Activated CD4-positive, alpha-beta T cell treated with anti-CD3 and anti-CD28 coated beads, Interleukin-2, amount 10 ng/mL, durations not matched to agents 24 days and 14 days (primary cell): ENCODE measurements at regions of chr7 and their contacts with region 1.

Region 1: GRCh38 chr7:87797798-87798403 is 78.3 kb downstream of the SLC25A40 start:
- DNase-seq: peak; percentile 73
- H3K4me3 Mint-ChIP-seq: no peak overlapping the region
- H3K27ac Mint-ChIP-seq: no peak overlapping the region
- H3K4me1 Mint-ChIP-seq: no peaks in the 10 kb centered on the region
- H3K27me3 Mint-ChIP-seq: peaks cover 14% of the 10 kb centered on the region

Region 2: DNA sequence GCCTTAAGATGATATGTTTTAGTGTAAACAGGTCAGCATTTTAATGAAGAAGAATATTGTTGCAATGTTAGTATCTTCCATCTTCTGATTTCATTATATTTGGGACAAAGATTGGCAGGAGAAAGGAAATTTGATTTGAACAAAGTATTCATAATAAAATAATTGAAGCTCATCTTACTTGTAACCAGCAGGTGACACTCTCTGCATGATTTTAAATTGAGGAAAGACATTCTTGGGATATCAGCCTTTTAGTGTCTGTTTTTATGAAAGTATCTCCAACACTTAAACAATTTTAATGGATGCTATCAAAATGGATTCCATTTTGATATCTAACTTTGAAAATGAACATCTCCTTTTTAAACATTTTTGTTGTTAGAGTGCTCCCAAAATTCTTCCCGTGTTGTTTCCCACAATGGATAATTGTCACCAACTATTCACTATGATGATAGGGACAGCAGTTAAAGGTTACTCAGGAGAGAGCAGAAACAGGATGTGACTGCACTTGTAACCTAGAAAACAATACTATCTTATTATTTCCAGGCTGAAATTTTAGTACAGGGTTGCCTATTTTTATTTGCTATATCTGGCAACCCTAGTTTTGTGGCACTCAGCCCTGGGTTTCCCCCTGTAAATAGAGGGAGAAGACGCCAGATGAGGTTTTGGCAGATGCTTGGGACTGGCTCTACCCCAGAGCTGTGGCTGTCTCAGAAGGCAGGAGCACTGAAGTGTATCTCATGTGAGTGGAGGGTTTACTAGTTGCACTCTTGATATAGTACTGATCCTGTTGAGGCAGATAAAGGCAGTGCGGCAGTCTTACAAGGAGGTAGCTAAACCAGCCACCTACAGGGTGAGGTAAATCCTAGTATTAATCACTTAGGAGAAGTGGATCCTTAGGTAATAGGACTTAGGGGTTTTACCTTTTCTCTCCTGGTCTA is 291.4 kb before region 1 on chr7:
- intact Hi-C with region 1: loop called (anchors 5 kb)
- DNase-seq: no peak
- H3K4me3 Mint-ChIP-seq: no peak overlapping the region
- H3K27ac Mint-ChIP-seq: no peak overlapping the region
- H3K4me1 Mint-ChIP-seq: peaks cover 12% of the 10 kb centered on the region
- H3K27me3 Mint-ChIP-seq: no peaks in the 10 kb centered on the region

Region 3: GRCh38 chr7:87886875-87887274 is 89.0 kb after region 1 on chr7:
- intact Hi-C with region 1: loop called (anchors 1 kb)
- DNase-seq: no peak
- H3K4me3 Mint-ChIP-seq: no peak overlapping the region
- H3K27ac Mint-ChIP-seq: no peak overlapping the region
- H3K4me1 Mint-ChIP-seq: peaks cover 20% of the 10 kb centered on the region
- H3K27me3 Mint-ChIP-seq: no peaks in the 10 kb centered on the region

Region 4: GRCh38 chr7:88111136-88111743 is 313.3 kb after region 1 on chr7:
- intact Hi-C with region 1: loop called (anchors 1 kb)
- DNase-seq: no peak
- H3K4me3 Mint-ChIP-seq: no peak overlapping the region
- H3K27ac Mint-ChIP-seq: no peak overlapping the region
- H3K4me1 Mint-ChIP-seq: peaks cover 4% of the 10 kb centered on the region
- H3K27me3 Mint-ChIP-seq: no peaks in the 10 kb centered on the region

Region 5: DNA sequence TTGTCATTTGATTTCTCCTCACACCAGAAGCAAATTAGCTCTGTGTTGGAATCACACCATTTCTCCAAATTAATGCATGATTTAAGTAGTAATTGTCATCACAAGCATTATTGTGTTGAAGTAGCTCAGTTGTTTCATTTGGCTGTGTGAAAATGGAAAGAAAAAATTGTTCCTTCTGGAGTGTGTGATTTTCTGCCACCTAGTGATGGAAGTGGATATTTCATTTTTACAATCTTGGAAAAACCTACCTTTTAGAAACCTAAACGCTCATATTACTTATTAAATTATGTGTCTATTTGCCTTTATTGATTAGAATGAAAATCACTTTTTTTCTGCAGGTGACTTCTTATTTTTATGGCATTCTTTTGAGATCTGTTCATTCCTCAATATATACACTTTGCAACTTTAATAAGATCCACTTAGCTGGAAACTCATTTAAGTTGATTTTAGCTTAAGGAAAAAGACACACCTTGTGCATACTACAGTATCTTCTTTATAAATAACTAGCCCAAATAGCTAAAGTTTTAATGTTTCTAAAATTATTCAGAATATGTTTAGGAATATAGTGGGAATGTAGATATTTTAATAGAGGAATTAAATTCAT is 371.9 kb after region 1 on chr7:
- intact Hi-C with region 1: loop called (anchors 2 kb)
- DNase-seq: no peak
- H3K4me3 Mint-ChIP-seq: no peak overlapping the region
- H3K27ac Mint-ChIP-seq: no peak overlapping the region
- H3K4me1 Mint-ChIP-seq: no peaks in the 10 kb centered on the region
- H3K27me3 Mint-ChIP-seq: no peaks in the 10 kb centered on the region